ENCODE measurements at regions of chr12 and their contacts with region 1.

Region 1: DNA sequence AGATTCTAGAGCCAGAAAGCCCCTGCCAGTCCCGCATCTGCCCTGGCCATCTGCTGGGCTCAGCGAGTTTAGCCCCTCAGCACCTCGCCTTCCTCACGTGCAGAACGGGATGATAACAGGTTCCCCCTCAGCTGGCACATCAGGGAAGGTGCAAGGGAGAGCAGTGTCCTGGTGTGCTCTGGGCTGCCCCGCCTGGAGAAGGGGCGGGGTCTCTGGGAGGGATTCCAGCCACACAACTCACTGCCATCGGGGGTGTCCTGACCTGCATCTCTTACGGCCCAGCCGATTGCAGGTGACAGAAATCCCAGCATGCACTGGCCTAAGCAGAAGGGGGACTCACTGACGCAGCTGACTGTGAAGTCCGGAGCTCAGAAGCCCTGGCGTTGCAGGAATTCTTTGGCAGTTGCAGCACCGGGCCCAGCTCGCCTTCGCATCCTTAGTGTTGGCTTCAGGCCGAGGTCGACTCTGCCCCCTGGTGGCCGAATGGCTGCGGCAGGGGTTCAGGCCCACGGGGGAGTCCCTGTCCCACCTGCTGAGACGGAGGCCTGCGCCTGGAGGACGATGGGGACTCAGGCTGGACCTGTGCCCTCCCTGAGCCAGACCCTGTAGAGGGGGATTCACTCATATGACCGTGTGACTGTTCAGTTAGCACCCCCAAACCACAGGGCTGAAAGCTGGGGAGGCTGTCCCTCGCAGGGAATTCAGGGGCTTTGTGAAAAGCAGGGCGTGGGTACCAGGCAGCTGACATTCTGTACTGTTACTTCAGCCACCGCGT is 178.6 kb downstream of the ADGRD1 start:
- DNase-seq: peak; percentile 66 to 90 (median 89)
- ATAC-seq: peak; percentile 56 to 61
- H3K4me3 ChIP-seq: no peak overlapping the region
- H3K27ac ChIP-seq: no peak overlapping the region
- H3K4me1 ChIP-seq: peaks cover 2% of the 10 kb centered on the region
- H3K27me3 ChIP-seq: no peaks in the 10 kb centered on the region

Region 2: DNA sequence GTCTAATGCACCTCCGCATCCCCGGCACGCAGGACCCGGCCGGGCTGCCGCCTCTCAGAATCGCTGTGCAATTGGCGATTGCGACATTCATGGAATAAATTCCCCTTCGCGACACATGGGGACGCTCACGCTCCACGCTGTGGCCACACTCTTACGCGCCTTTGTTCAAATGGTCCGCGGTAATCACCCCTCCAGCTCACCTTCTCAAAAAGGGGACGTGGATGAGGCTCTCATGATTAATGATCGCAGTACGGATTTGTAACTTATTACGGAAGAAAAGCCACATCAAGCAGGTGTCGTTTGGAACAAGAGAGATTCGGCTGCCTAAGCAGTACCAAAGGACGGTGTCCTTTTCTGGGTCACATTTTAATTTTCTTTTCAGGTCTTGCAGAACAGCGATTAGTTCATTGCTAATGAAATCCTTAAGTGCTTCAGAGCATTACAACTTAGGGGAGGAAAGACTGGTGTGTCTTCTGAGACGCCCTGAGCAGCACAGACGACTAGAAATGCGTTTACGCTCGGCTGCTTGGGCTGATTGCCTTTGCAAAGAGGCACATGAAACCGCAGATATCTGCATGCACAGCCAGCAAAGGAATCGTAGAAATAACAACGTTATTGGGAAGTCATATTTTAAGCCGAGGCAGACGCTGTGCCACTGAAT is 215.9 kb before region 1 on chr12:
- intact Hi-C with region 1: loop called in 3 of 4 experiments (anchors 5 to 10 kb)
- DNase-seq: peak; percentile 50 to 79 (median 75)
- ATAC-seq: peak; percentile 63 to 70
- H3K4me3 ChIP-seq: no peak overlapping the region
- H3K27ac ChIP-seq: no peak overlapping the region
- H3K4me1 ChIP-seq: peaks cover 2% of the 10 kb centered on the region
- H3K27me3 ChIP-seq: no peaks in the 10 kb centered on the region

Measured in right cardiac atrium (tissue), 5 donors.